Caco-2 (cell line): ENCODE measurements at regions of chr1 and their contacts with region 1.

Region 1: GRCh38 chr1:21573971-21574465 is 64.8 kb downstream of the ALPL start:
- DNase-seq: peak; percentile 71
- H3K4me3 ChIP-seq: no peak overlapping the region
- H3K4me3 Mint-ChIP-seq: no peak overlapping the region
- H3K27ac Mint-ChIP-seq: no peak overlapping the region
- H3K4me1 ChIP-seq: no peaks in the 10 kb centered on the region
- H3K4me1 Mint-ChIP-seq: no peaks in the 10 kb centered on the region
- H3K27me3 ChIP-seq: no peaks in the 10 kb centered on the region
- H3K27me3 Mint-ChIP-seq: no peaks in the 10 kb centered on the region
- CTCF ChIP-seq: peak; percentile 50 to 67

Region 2: DNA sequence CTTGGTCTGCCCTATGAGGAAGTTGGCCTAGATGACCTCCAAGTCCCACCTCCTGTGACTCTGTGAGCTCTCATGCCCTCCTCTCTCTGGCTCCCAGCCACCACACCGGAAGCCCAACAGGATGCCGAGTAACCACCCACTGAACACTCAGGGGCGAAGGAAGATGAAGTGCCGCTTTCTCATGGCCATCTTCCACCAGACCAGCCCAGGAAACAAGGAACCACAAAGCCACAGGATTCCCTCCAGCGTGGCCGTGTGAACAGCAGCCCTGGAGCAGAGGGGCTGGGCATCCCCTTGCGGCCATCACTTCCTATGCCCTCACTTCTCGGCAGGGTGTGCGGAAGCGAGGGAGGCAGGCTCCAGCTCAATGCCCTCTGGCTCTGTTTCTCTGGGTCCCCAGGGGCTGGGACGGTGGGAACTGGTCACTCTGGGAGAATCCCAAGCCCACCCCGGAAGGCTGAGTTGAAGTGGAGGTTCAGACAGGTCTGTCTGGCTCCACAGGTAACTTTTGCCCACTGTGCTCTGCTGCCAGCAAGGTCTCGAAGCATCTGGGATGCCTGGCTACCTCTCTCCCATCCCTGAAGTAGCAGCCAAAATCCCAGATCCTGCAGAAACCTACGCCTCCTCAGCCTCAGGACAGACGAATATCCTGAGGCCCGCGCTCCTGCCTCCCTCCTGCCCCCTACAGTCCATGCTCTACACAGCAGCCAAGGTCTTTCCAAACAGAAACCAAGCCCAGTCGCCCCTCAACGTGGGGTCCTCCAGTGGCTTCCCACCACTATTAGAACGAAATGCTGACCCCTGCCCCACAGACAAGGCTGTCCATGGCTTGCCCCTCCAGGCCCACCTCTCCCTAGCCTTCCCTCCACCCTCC is 239.6 kb before region 1 on chr1:
- CTCF ChIA-PET with region 1: no interaction called
- POLR2A ChIA-PET with region 1: no interaction called
- intact Hi-C with region 1: no loop called
- DNase-seq: peak in 1 of 2 experiments; percentile 44
- H3K4me3 ChIP-seq: no peak overlapping the region
- H3K4me3 Mint-ChIP-seq: no peak overlapping the region
- H3K27ac Mint-ChIP-seq: no peak overlapping the region
- H3K4me1 ChIP-seq: peaks cover 19% of the 10 kb centered on the region
- H3K4me1 Mint-ChIP-seq: peaks cover 13% of the 10 kb centered on the region
- H3K27me3 ChIP-seq: no peaks in the 10 kb centered on the region
- H3K27me3 Mint-ChIP-seq: no peaks in the 10 kb centered on the region
- CTCF ChIP-seq: peak; percentile 36 to 39

Region 3: DNA sequence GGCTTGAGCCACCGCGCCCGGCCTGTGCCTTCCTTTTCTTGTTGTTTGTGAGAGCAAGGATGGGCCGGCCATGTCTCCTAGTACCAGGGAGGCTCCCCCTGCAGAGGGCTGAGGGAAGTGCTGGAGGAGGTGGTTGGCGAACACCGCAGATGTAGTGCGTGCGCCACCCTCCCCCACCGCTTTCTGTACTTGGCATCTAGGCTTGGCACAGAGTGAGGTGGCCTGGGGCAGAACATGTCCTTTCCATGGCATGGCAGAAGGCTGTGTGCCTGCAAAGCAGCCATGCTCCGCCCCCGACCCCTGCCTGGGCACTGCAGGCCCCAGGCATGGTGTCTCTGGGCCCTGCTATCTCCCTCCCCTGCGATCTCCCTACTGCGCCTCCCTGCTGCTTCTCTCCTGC is 34.1 kb before region 1 on chr1:
- CTCF ChIA-PET with region 1: no interaction called
- POLR2A ChIA-PET with region 1: no interaction called
- intact Hi-C with region 1: loop called (anchors 2 kb)
- DNase-seq: no peak
- H3K4me3 ChIP-seq: no peak overlapping the region
- H3K4me3 Mint-ChIP-seq: no peak overlapping the region
- H3K27ac Mint-ChIP-seq: no peak overlapping the region
- H3K4me1 ChIP-seq: peaks cover 6% of the 10 kb centered on the region; the same call in 1 of the 2 replicates
- H3K4me1 Mint-ChIP-seq: no peaks in the 10 kb centered on the region
- H3K27me3 ChIP-seq: no peaks in the 10 kb centered on the region
- H3K27me3 Mint-ChIP-seq: no peaks in the 10 kb centered on the region
- CTCF ChIP-seq: peak; percentile 10 to 34

Region 4: GRCh38 chr1:21919520-21919919 is 345.5 kb after region 1 on chr1:
- CTCF ChIA-PET with region 1: no interaction called
- POLR2A ChIA-PET with region 1: no interaction called
- intact Hi-C with region 1: no loop called
- DNase-seq: no peak
- H3K4me3 ChIP-seq: no peak overlapping the region
- H3K4me3 Mint-ChIP-seq: no peak overlapping the region
- H3K27ac Mint-ChIP-seq: peak overlapping the region; percentile 95
- H3K4me1 ChIP-seq: peaks cover 71% of the 10 kb centered on the region
- H3K4me1 Mint-ChIP-seq: peaks cover 41% of the 10 kb centered on the region
- H3K27me3 ChIP-seq: no peaks in the 10 kb centered on the region
- H3K27me3 Mint-ChIP-seq: no peaks in the 10 kb centered on the region
- CTCF ChIP-seq: no peak